SK-N-SH (cell line): ENCODE measurements at regions of chr11 and their contacts with region 1.

Region 1: GRCh38 chr11:11787305-11788062 is 54.3 kb upstream of the USP47 start:
- DNase-seq: peak; percentile 57
- H3K4me3 ChIP-seq: no peak overlapping the region
- H3K27ac ChIP-seq: no peak overlapping the region
- H3K4me1 ChIP-seq: no peaks in the 10 kb centered on the region; a peak in 1 of 4 replicates
- H3K27me3 ChIP-seq: no peaks in the 10 kb centered on the region
- CTCF ChIP-seq: peak; percentile 94
- EP300 ChIP-seq: no peak
- RAD21 ChIP-seq: peak; percentile 98

Region 2: DNA sequence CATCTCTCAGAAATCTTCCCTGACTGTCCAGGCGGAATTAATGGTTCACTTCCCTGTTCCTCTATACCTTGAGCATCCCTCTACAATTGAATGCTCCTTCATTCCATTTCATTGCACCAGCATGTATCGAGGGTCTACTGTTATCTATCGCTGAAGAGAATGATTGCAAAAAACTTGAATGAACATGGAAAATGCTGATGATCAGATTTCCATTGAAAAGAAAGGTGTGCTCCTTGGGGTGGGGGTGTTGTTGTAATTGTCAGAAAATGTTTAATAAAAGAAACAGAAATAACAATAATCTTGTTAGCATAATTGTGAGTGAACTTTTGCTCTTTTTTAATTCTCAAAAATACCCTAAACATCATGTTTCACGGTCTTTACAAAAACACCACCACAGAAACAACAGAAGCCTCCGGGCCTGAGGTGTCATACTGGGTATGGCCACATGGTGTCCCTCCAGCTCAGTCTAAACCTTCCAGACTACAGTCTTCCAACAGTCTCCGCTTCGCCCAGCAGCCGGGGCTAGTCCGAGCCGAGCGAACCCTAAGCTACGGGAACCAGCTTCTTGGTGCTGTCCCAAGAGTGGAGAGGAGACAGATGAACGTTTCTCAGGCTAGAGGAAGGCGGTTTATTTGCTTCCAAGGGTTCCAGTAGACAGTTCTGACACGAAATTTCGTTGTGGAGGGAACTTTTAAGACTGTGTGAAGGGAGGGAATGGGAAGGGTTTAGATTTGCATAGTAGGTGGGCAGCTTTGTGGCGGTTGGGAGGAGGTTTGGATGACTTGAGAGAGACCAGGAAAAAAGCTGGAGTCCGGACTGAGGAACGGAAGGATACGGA is 853.8 kb before region 1 on chr11:
- CTCF ChIA-PET with region 1: interaction called, 49 read pairs
- POLR2A ChIA-PET with region 1: interaction called, 4 read pairs
- DNase-seq: peak; percentile 78
- H3K4me3 ChIP-seq: peak overlapping the region; percentile 44 to 54
- H3K27ac ChIP-seq: peak overlapping the region; percentile 30 to 69; a peak in 1 of 4 replicates
- H3K4me1 ChIP-seq: peaks cover 0 to 9% of the 10 kb centered on the region in 2 experiments; a peak in 1 of 4 replicates
- H3K27me3 ChIP-seq: no peaks in the 10 kb centered on the region
- CTCF ChIP-seq: peak; percentile 94
- EP300 ChIP-seq: no peak
- RAD21 ChIP-seq: peak; percentile 99

Region 3: GRCh38 chr11:11028017-11028692 is 759.3 kb before region 1 on chr11:
- CTCF ChIA-PET with region 1: interaction called, 95 read pairs
- POLR2A ChIA-PET with region 1: interaction called, 5 read pairs
- DNase-seq: peak; percentile 27
- H3K4me3 ChIP-seq: peak overlapping the region in 1 of 2 experiments; percentile 50; a peak in 1 of 4 replicates
- H3K27ac ChIP-seq: no peak overlapping the region
- H3K4me1 ChIP-seq: peaks cover 0 to 7% of the 10 kb centered on the region in 2 experiments; a peak in 3 of 4 replicates
- H3K27me3 ChIP-seq: no peaks in the 10 kb centered on the region
- CTCF ChIP-seq: no peak
- EP300 ChIP-seq: no peak
- RAD21 ChIP-seq: peak; percentile 62

Region 4: DNA sequence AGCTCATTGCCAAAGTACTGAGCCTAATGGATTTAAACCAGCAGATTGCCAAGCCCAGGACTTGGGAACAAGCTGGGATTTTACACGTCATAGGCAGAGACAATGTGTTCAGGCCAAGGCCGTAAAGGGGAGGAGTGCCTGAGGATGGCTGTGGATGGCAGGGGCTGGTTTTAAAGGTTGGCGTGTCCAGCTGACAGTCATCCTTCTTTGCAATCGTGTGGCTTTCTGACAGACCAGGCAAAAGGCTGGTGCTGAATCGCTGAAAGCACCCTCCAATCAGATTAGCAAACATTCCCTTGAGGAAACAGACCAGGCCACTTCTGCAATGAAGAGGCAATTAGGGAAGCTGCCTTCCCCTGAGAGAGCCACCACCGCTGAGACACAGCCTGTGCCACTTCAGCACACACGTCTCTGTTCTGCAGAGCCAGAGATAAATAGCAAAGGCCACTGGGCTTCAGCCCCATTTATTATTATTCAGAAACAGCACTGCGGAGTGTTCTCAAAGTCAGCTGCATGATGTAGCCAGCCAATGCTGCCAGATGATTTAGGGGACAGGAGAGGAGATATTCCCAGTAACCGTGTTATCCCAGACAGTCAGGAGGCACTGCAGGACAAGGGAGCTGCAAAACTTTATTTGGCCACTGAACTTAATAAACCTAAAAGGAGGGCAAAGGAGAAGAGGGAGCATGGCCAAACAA is 380.3 kb before region 1 on chr11:
- CTCF ChIA-PET with region 1: interaction called, 13 read pairs
- POLR2A ChIA-PET with region 1: no interaction called
- DNase-seq: peak; percentile 70
- H3K4me3 ChIP-seq: no peak overlapping the region
- H3K27ac ChIP-seq: peak overlapping the region in 1 of 2 experiments; percentile 89; a peak in 2 of 4 replicates
- H3K4me1 ChIP-seq: peaks cover 0 to 46% of the 10 kb centered on the region in 2 experiments; a peak in 2 of 4 replicates
- H3K27me3 ChIP-seq: peaks cover 4% of the 10 kb centered on the region; the same call in 1 of the 2 replicates
- CTCF ChIP-seq: no peak
- EP300 ChIP-seq: peak in 1 of 2 experiments; percentile 75; a peak in 2 of 4 replicates
- RAD21 ChIP-seq: peak; percentile 39; the same call in 1 of the 2 replicates

Region 5: GRCh38 chr11:11770921-11771484 is 16.5 kb before region 1 on chr11:
- CTCF ChIA-PET with region 1: interaction called, 44 read pairs
- POLR2A ChIA-PET with region 1: no interaction called
- DNase-seq: no peak
- H3K4me3 ChIP-seq: no peak overlapping the region
- H3K27ac ChIP-seq: no peak overlapping the region
- H3K4me1 ChIP-seq: no peaks in the 10 kb centered on the region
- H3K27me3 ChIP-seq: peaks cover 9% of the 10 kb centered on the region; the same call in 1 of the 2 replicates
- CTCF ChIP-seq: no peak
- EP300 ChIP-seq: no peak
- RAD21 ChIP-seq: no peak

Region 6: DNA sequence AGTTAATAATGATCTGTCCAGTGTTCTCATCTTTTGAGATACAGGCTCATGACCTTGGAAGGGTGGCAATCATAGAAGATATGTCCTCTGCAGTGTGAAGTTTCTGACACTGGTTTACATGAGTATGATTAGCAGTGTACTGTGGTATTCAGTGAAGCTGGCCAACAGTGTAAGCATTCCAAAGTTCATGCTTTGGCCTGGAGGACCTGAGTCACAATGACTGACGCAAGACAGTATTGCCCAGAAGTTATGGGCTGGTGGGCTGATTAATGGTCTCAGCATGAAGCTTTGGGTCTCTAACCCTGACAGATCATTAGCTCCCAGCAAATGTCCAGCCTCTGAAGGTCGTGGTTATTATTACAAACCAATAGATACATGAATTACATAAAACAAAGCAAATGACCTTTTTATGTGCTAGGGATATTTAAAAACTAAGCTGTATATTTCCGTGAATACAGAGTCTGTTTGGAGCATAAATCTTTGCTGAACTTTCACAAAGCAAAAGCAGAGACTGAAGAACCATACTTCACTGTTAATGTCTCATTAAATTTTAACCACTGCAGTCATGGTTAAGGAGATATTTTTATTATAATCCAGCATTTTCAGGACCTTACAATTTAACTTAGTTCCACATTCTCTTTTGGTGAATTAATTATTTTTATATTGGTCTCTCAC is 25.9 kb after region 1 on chr11:
- CTCF ChIA-PET with region 1: no interaction called
- POLR2A ChIA-PET with region 1: no interaction called
- DNase-seq: no peak
- H3K4me3 ChIP-seq: no peak overlapping the region
- H3K27ac ChIP-seq: peak overlapping the region in 1 of 2 experiments; percentile 60; a peak in 2 of 4 replicates
- H3K4me1 ChIP-seq: no peaks in the 10 kb centered on the region
- H3K27me3 ChIP-seq: no peaks in the 10 kb centered on the region
- CTCF ChIP-seq: no peak
- EP300 ChIP-seq: no peak
- RAD21 ChIP-seq: no peak

Region 7: DNA sequence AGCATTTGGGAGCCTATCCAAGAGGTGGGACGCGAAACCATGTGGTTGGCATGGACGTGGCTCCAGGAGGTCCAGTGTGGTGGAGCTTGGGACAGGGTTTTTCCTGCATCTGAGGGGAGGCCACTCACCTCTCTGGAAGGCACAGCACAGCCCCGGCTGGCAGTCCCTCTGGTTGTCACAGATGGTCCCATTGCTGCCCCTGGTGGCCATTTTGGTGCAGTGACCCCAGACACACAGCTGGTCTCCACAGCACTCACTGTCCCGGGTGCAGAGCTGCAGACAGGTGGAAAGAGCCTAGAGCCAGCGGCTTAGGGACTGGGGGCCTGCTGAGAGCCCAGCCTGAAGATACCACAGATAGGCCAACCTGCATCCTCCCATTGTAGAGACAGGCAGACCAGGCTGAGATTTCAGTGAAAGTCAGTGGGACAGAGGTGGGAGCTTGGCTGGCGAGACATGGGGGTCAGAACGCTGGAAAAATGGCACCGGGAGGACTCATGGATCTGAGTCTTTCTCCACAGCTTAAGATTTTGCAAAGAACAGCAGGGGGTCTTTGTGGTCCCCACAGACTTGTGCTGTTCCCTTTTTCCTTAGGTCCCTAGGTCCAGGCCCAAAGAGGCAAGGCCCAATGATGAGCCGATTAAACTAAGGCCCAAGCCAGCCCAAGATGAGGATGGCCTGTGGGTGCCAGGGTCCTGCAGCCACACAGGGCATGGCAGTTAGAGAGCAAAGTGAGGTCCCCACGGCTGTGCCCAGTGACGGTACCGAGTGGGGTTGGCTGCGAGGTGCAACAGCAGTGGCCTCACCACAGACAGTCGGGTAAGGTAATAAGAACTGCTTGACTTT is 179.6 kb after region 1 on chr11:
- CTCF ChIA-PET with region 1: no interaction called
- POLR2A ChIA-PET with region 1: no interaction called
- DNase-seq: peak; percentile 77
- H3K4me3 ChIP-seq: no peak overlapping the region; a peak in 1 of 4 replicates
- H3K27ac ChIP-seq: peak overlapping the region; percentile 85 to 100; a peak in 3 of 4 replicates
- H3K4me1 ChIP-seq: peaks cover 22 to 80% of the 10 kb centered on the region in 2 experiments
- H3K27me3 ChIP-seq: no peaks in the 10 kb centered on the region
- CTCF ChIP-seq: peak; percentile 76
- EP300 ChIP-seq: no peak
- RAD21 ChIP-seq: peak; percentile 64

Region 8: GRCh38 chr11:12122083-12122482 is 334.6 kb after region 1 on chr11:
- CTCF ChIA-PET with region 1: no interaction called
- POLR2A ChIA-PET with region 1: no interaction called
- DNase-seq: no peak
- H3K4me3 ChIP-seq: no peak overlapping the region
- H3K27ac ChIP-seq: peak overlapping the region in 1 of 2 experiments; percentile 78; a peak in 2 of 4 replicates
- H3K4me1 ChIP-seq: peaks cover 0 to 50% of the 10 kb centered on the region in 2 experiments; a peak in 2 of 4 replicates
- H3K27me3 ChIP-seq: no peaks in the 10 kb centered on the region
- CTCF ChIP-seq: peak; percentile 63
- EP300 ChIP-seq: no peak
- RAD21 ChIP-seq: 0 out of 2 replicates have a peak, but pooled peaks have one; percentile 32

Region 9: DNA sequence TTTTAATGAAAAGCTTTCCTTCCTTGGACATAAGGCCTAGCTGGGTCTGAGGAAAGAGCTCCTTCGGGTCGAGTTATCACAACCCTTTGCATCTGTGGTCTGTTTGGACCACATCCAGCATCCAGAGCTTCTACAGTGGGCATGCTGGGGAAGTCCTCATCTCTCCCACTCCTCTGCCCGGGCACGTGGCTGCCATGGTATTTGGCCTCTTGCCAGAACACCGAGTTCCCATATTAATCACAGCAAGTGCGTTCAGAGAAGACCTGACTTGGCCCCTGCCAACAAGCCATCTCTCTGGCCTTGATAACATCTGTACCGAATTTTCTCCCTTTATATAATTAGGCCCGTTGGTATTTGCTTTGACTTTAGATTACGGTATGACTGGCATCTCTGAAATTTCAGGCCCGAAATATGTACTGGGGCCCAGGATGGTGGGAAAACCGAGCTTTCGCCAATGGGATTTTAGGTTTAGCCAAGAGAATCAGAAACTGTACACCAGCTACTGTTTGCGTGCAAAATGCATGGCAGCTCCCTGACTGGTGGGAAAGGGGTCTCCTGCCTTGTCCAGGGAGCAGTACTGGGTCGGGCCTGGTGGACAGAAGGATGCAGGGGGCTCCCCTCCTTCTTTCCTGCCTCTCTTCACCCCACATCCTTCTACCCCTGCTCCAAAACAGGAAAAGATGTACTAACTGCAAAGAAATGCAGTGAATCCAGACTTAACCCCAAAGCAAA is 413.0 kb after region 1 on chr11:
- CTCF ChIA-PET with region 1: no interaction called
- POLR2A ChIA-PET with region 1: no interaction called
- DNase-seq: peak; percentile 42
- H3K4me3 ChIP-seq: no peak overlapping the region
- H3K27ac ChIP-seq: peak overlapping the region; percentile 81 to 100
- H3K4me1 ChIP-seq: peaks cover 24 to 27% of the 10 kb centered on the region in 2 experiments; a peak in 3 of 4 replicates
- H3K27me3 ChIP-seq: no peaks in the 10 kb centered on the region
- CTCF ChIP-seq: no peak
- EP300 ChIP-seq: peak in 1 of 2 experiments; percentile 90; a peak in 2 of 4 replicates
- RAD21 ChIP-seq: no peak